T-cell (primary cell): ENCODE measurements at regions of chr2 and their contacts with region 1.

Region 1: DNA sequence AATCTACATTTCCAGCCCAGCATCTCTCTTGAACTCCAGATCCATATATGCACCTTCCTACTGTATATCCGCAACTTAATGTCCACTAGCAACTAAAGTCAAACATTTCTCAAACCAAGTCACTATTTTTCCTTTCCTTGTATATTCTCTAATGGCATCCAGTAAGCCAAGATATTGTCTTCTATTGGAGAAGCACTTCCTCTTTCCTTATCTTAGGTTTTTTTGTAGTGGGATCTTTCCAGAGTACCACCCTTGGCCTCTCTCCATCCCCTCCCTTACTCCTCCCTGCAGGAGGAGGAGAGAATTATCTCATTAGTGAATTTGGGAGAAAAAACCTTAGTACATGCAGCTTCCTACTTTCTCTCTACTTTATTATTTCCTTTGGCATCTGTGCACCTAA is 8.7 kb upstream of the DYNC1I2 start:
- DNase-seq: no peak
- ATAC-seq: no peak
- H3K4me3 ChIP-seq: no peak overlapping the region
- H3K4me3 Mint-ChIP-seq: no peak overlapping the region
- H3K27ac ChIP-seq: no peak overlapping the region
- H3K27ac Mint-ChIP-seq: no peak overlapping the region
- H3K4me1 ChIP-seq: no peaks in the 10 kb centered on the region
- H3K4me1 Mint-ChIP-seq: no peaks in the 10 kb centered on the region
- H3K27me3 ChIP-seq: no peaks in the 10 kb centered on the region
- H3K27me3 Mint-ChIP-seq: peaks cover under 1 to 7% of the 10 kb centered on the region in 2 donors

Region 2: DNA sequence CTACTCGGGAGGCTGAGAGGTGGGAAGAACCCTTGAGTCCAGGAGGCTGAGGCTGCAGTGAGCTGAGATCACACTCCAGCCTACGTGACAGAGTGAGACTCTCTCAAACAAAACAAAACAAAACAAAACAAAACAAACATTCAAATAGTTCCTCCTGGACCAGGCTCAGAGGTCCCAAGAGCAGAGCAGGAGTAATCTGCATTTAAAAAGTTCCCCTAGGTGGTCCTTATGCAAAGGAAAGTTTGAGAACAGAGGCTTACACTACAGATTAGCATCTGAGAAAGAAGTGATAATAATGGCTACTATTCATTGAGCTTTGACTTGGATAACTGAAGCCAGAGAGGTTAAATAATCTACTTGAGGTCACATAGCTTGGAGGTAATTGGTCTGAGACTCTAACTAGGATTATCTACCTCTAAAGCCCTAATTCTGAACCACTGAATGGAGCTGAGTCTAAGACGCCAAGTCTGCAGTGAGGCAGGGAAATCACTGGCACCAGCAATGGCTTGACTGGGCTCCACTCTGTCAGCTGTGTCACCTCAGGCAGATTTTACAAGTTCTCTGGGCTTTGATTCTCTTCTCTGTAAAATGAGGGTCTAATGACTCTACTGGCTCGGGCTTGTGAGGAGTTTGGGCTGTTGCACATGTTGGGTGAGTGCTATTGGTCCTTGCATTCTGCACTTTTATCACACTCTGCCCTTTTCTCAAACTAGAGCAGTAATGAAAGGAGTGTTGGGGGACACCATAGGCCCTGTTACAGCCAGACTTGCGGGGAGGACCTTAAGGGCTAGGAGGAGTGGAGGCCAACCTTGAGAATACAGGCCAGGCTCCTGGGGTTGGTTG is 453.3 kb after region 1 on chr2:
- CTCF ChIA-PET with region 1: interaction called in 1 of 2 experiments, 11 read pairs
- POLR2A ChIA-PET with region 1: no interaction called
- DNase-seq: no peak
- ATAC-seq: no peak
- H3K4me3 ChIP-seq: no peak overlapping the region
- H3K4me3 Mint-ChIP-seq: no peak overlapping the region
- H3K27ac ChIP-seq: no peak overlapping the region
- H3K27ac Mint-ChIP-seq: no peak overlapping the region
- H3K4me1 ChIP-seq: no peaks in the 10 kb centered on the region
- H3K4me1 Mint-ChIP-seq: no peaks in the 10 kb centered on the region
- H3K27me3 ChIP-seq: peaks cover 0 to 4% of the 10 kb centered on the region in 2 experiments
- H3K27me3 Mint-ChIP-seq: peaks cover 2 to 6% of the 10 kb centered on the region in 2 donors